ENCODE measurements at regions of chr10 and their contacts with region 1.

Region 1: GRCh38 chr10:124388823-124389612 is 29.7 kb downstream of the OAT start:
- DNase-seq: peak; percentile 79 to 95
- ATAC-seq: peak; percentile 100

Region 2: DNA sequence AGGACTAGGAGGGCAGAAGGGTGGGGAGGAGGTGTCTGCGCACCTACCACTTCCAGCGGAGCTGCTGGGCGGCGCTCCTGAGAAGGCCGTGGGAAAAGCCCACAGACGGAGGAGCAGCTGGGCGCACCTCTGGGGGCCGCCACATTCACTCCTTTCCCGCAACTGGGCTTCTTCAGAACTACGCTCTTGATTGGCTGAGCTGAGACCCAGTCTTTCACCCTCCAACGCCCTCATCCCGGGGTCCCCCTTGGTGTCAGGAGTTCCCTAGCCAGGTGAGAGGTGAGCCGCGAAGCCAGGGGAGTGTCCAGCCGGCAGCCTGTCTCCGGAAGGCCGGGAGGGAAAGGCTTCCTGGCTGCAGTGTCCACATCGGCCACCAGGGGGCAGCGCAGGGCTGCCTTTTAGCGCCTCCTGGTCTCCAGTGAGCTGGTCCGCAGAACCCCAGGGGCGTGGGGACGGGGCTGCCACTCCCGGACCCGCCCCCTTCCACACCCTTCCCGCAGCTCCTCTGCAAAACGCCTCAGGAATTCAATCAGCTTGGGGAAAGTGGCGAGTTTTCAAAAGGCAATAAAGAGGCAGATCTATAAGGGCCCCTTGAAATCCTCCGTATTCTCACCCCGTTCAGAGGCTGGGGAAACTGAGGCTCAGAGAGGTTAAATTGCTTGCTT is 394.5 kb before region 1 on chr10:
- intact Hi-C with region 1: loop called (anchors 5 kb)
- DNase-seq: peak; percentile 72 to 89
- ATAC-seq: peak; percentile 89

Region 3: DNA sequence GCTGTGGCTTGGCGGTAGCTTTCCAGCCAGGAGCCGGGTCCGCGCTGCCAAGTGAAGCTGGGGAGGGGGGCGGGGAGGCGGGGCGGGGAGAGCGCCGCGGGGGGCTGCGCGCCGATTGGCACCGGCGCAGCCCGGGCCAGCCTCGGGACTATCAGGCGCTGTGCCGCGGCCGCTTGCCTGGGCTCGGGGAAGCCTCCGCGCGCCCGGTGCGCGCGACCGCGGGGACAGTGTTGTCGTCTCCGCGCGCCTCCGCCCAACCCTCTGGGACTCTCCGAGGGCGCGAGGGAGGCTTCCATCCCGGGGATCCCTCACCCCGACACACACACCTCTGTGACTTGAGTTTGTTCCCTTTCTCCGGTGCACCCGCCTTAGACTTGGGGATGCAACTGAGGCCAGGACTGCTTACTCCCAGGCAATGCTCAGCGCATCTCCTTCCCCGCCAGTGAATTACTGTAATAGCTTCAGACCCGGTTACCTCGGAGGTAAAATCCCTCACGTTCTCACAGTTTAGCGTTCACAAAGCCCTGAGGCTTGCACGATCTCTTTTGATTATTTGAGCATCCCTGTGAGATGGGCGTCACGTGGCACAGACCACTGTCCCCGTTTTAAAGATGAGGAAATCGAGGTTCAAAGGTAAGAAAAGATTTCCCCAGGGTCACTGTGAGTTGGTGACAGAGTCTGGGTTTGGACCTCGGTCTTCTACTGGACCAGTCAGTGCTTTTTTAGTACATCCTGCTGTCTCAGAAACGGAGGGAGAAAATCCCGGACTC is 61.2 kb after region 1 on chr10 and contains the start of gene NKX1-2:
- intact Hi-C with region 1: no loop called
- DNase-seq: no peak
- ATAC-seq: no peak
- total RNA-seq, gene NKX1-2: not detected

Region 4: GRCh38 chr10:124539935-124540641 is 151.1 kb after region 1 on chr10:
- intact Hi-C with region 1: no loop called
- DNase-seq: peak in 1 of 2 donors; percentile 73
- ATAC-seq: peak; percentile 66

Region 5: DNA sequence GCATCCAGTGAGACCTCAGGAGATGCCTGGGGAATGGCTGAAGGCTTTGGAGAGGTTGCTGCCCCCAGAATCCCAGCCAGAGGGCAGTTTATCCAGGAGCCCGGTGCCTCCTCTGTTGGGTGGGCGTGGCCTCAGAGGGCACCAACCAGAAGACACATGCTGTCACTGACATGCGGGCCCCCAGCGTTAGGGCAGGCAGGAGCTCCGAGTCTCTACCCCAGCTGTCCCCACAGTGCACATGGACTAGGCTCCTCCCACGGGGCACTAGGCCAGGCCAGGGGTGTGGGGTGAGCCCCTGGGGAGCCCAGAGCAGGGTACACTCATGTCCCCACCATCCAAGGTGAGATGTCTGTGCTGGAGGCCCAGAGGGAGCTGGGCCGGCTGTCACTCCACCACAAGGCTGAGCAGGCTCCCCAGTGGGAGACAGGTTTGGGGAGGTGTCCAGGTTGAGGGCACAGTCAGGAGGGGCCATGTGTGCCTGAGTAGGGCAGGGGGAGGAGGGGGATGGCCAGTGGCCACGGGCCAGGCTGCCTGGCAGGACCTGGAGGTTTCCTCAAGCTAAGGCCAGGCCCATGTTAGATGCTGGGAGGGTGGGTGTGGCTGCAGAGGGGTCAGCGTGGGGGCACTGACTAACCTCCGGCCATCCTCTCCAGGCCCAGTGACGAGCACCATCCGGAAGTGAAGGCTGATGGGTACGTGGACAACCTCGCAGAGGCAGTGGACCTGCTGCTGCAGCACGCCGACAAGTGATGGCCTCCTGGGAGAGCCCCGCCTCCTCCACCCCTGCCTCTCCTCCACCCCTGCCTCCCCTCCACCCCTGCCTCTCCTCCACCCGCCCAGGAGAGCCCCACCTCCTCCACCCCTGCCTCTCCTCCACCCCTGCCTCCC is 223.8 kb after region 1 on chr10:
- intact Hi-C with region 1: no loop called
- DNase-seq: no peak
- ATAC-seq: peak; percentile 7

Measured in left colon (tissue), 2 donors.